ENCODE measurements at regions of chr9 and their contacts with region 1.

Region 1: GRCh38 chr9:129131300-129132145 is 20.3 kb downstream of the PTPA start:
- DNase-seq: peak; percentile 75 to 87 (median 78)
- ATAC-seq: peak; percentile 55 to 88 (median 86)
- H3K4me3 ChIP-seq: no peak overlapping the region
- H3K27ac ChIP-seq: no peak overlapping the region
- H3K4me1 ChIP-seq: peaks cover 0 to 17% (median 0%) of the 10 kb centered on the region in 12 donors
- H3K27me3 ChIP-seq: no peaks in the 10 kb centered on the region
- CTCF ChIP-seq: peak; percentile 92 to 99 (median 98)
- POLR2A ChIP-seq: no peak

Region 2: GRCh38 chr9:129185991-129186390 is 54.5 kb after region 1 on chr9:
- intact Hi-C with region 1: no loop called
- DNase-seq: no peak
- ATAC-seq: no peak
- H3K4me3 ChIP-seq: no peak overlapping the region
- H3K27ac ChIP-seq: no peak overlapping the region
- H3K4me1 ChIP-seq: peaks cover 0 to 6% (median 0%) of the 10 kb centered on the region in 12 donors
- H3K27me3 ChIP-seq: no peaks in the 10 kb centered on the region
- CTCF ChIP-seq: no peak
- POLR2A ChIP-seq: no peak

Region 3: GRCh38 chr9:129626079-129626624 is 494.6 kb after region 1 on chr9 and contains the start of gene NTMT1:
- intact Hi-C with region 1: loop called in 2 of 10 experiments (anchors 5 kb)
- DNase-seq: peak; percentile 86 to 95 (median 91)
- ATAC-seq: peak; percentile 79 to 94 (median 92)
- H3K4me3 ChIP-seq: peak within 1 kb of the TSS; percentile 64 to 85 (median 72)
- H3K27ac ChIP-seq: peak within 1 kb of the TSS; percentile 60 to 98 (median 94)
- H3K4me1 ChIP-seq: peaks cover 16 to 66% (median 46%) of the 10 kb centered on the region in 12 donors
- H3K27me3 ChIP-seq: peaks cover 0 to 4% (median 0%) of the 10 kb centered on the region in 9 donors
- CTCF ChIP-seq: no peak
- POLR2A ChIP-seq: peak; percentile 79 to 96
- total RNA-seq, gene NTMT1: 39.0 to 76.7 (median 56.0) TPM

Measured in heart left ventricle (tissue), 16 donors.